Activated naive CD4-positive, alpha-beta T cell treated with anti-CD3 and anti-CD28 coated beads, Interleukin-2, amount 10 ng/mL, durations not matched to agents 7 days and 5 days (primary cell): ENCODE measurements at regions of chr2 and their contacts with region 1.

Region 1: GRCh38 chr2:237421542-237422116 is 7.7 kb upstream of the COL6A3 start:
- DNase-seq: peak; percentile 86
- H3K4me3 Mint-ChIP-seq: no peak overlapping the region
- H3K27ac Mint-ChIP-seq: no peak overlapping the region
- H3K4me1 Mint-ChIP-seq: peaks cover 15% of the 10 kb centered on the region
- H3K27me3 Mint-ChIP-seq: peaks cover 20% of the 10 kb centered on the region

Region 2: GRCh38 chr2:237154082-237154638 is 267.5 kb before region 1 on chr2:
- CTCF ChIA-PET with region 1: interaction called, 14 read pairs
- DNase-seq: peak; percentile 65
- H3K4me3 Mint-ChIP-seq: no peak overlapping the region
- H3K27ac Mint-ChIP-seq: no peak overlapping the region
- H3K4me1 Mint-ChIP-seq: peaks cover 10% of the 10 kb centered on the region
- H3K27me3 Mint-ChIP-seq: peaks cover 24% of the 10 kb centered on the region

Region 3: GRCh38 chr2:237434866-237435311 is 13.3 kb after region 1 on chr2:
- CTCF ChIA-PET with region 1: interaction called, 44 read pairs
- DNase-seq: peak; percentile 85
- H3K4me3 Mint-ChIP-seq: peak overlapping the region; percentile 37
- H3K27ac Mint-ChIP-seq: peak overlapping the region; percentile 54
- H3K4me1 Mint-ChIP-seq: peaks cover 78% of the 10 kb centered on the region
- H3K27me3 Mint-ChIP-seq: no peaks in the 10 kb centered on the region

Region 4: GRCh38 chr2:237441605-237442274 is 20.1 kb after region 1 on chr2:
- CTCF ChIA-PET with region 1: interaction called, 44 read pairs
- DNase-seq: peak; percentile 31
- H3K4me3 Mint-ChIP-seq: no peak overlapping the region
- H3K27ac Mint-ChIP-seq: no peak overlapping the region
- H3K4me1 Mint-ChIP-seq: peaks cover 43% of the 10 kb centered on the region
- H3K27me3 Mint-ChIP-seq: peaks cover 3% of the 10 kb centered on the region

Region 5: GRCh38 chr2:237459226-237459625 is 37.6 kb after region 1 on chr2:
- CTCF ChIA-PET with region 1: interaction called, 11 read pairs
- DNase-seq: no peak
- H3K4me3 Mint-ChIP-seq: no peak overlapping the region
- H3K27ac Mint-ChIP-seq: peak overlapping the region; percentile 22
- H3K4me1 Mint-ChIP-seq: peaks cover 11% of the 10 kb centered on the region
- H3K27me3 Mint-ChIP-seq: peaks cover 6% of the 10 kb centered on the region

Region 6: GRCh38 chr2:237474931-237475703 is 53.5 kb after region 1 on chr2:
- CTCF ChIA-PET with region 1: interaction called, 110 read pairs
- DNase-seq: peak; percentile 79
- H3K4me3 Mint-ChIP-seq: peak overlapping the region; percentile 76
- H3K27ac Mint-ChIP-seq: peak overlapping the region; percentile 76
- H3K4me1 Mint-ChIP-seq: peaks cover 13% of the 10 kb centered on the region
- H3K27me3 Mint-ChIP-seq: peaks cover 28% of the 10 kb centered on the region

Region 7: GRCh38 chr2:237483040-237483721 is 61.6 kb after region 1 on chr2:
- CTCF ChIA-PET with region 1: interaction called, 16 read pairs
- DNase-seq: no peak
- H3K4me3 Mint-ChIP-seq: no peak overlapping the region
- H3K27ac Mint-ChIP-seq: no peak overlapping the region
- H3K4me1 Mint-ChIP-seq: no peaks in the 10 kb centered on the region
- H3K27me3 Mint-ChIP-seq: peaks cover 77% of the 10 kb centered on the region